ENCODE measurements at regions of chr2 and their contacts with region 1.

Region 1: DNA sequence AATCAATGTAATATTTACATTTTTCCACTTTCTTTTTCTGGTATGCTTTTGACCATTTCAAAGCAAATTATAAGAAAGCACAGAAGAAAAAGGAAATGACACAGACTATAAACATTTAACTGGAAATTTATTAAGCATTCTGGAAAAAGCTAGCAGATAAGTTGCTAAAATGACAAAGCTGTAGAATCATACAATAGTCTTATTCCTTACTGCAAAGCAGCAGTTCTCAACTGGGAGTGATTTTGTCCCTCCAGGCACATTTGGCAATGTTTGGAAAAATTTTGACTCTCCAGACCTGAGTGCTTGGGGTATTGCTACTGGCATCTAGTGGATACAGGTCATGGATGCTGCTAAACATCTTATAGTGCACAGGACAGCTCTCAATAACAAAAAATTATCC is 75.1 kb downstream of the MBD5 start:
- DNase-seq: peak; percentile 12
- ATAC-seq: peak; percentile 48
- H3K4me3 ChIP-seq: no peak overlapping the region
- H3K27ac ChIP-seq: no peak overlapping the region
- H3K4me1 ChIP-seq: no peaks in the 10 kb centered on the region
- H3K27me3 ChIP-seq: no peaks in the 10 kb centered on the region
- CTCF ChIP-seq: 0 out of 2 replicates have a peak, but pooled peaks have one; percentile 10

Region 2: DNA sequence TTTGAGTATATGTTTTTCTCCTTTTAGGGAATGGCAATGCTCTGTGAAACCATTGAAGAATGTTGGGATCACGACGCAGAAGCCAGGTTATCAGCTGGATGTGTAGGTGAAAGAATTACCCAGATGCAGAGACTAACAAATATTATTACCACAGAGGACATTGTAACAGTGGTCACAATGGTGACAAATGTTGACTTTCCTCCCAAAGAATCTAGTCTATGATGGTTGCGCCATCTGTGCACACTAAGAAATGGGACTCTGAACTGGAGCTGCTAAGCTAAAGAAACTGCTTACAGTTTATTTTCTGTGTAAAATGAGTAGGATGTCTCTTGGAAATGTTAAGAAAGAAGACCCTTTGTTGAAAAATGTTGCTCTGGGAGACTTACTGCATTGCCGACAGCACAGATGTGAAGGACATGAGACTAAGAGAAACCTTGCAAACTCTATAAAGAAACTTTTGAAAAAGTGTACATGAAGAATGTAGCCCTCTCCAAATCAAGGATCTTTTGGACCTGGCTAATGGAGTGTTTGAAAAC is 168.9 kb before region 1 on chr2:
- CTCF ChIA-PET with region 1: no interaction called
- POLR2A ChIA-PET with region 1: interaction called, 10 read pairs
- intact Hi-C with region 1: no loop called
- DNase-seq: no peak
- ATAC-seq: no peak
- H3K4me3 ChIP-seq: no peak overlapping the region
- H3K27ac ChIP-seq: no peak overlapping the region
- H3K4me1 ChIP-seq: no peaks in the 10 kb centered on the region
- H3K27me3 ChIP-seq: no peaks in the 10 kb centered on the region
- CTCF ChIP-seq: no peak

Measured in PC-3 (cell line).